Gastrocnemius medialis (tissue), 4 donors: ENCODE measurements at regions of chr9 and their contacts with region 1.

Region 1: DNA sequence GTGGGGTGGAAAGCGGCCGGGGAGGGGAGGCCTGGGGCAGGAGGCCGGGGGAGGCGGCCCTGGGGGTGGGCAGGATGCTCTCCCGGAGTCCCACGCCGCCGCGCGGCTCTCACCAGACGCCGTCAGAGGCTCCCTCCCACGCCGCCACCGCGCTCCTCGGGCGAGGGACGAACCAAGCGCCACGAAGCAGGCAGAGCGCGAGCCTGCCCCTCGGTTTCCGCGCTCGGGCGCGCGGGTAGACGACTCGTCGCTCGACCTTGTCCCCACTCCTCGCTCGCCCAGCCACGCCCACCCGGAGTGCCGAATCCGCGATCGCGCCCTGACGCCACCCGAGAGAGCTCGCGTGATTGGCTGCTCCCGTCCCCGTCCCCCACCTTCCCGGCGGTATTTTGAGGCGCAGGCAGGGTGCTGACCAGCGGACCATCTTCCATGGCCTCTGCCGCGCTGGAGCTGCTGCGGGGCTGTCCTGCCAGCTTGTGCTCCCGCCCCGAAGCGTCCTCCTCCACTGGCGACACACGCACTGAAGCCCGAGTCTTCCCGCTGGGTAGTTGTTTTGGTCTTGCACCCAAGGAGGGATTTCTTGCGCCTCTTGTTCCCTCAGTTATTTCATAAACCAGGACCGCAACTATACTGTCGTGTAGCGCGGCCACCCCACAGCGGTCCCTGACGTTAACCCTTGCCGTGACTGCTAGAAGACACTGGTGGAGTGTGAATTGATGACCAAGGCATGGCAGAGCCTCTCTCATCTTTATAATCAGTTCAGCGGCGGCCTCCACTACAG is at the start of gene GNE:
- DNase-seq: peak; percentile 97
- ATAC-seq: peak; percentile 95 to 96
- H3K4me3 ChIP-seq: peak within 1 kb of the TSS; percentile 80 to 97 (median 96)
- H3K27ac ChIP-seq: peak within 1 kb of the TSS; percentile 98 to 99 (median 98)
- H3K4me1 ChIP-seq: peaks cover 4 to 5% of the 10 kb centered on the region in 2 donors
- H3K27me3 ChIP-seq: no peaks in the 10 kb centered on the region
- CTCF ChIP-seq: no peak
- POLR2A ChIP-seq: peak; percentile 91 to 92
- total RNA-seq, gene GNE: 11.0 to 18.5 (median 13.9) TPM

Region 2: DNA sequence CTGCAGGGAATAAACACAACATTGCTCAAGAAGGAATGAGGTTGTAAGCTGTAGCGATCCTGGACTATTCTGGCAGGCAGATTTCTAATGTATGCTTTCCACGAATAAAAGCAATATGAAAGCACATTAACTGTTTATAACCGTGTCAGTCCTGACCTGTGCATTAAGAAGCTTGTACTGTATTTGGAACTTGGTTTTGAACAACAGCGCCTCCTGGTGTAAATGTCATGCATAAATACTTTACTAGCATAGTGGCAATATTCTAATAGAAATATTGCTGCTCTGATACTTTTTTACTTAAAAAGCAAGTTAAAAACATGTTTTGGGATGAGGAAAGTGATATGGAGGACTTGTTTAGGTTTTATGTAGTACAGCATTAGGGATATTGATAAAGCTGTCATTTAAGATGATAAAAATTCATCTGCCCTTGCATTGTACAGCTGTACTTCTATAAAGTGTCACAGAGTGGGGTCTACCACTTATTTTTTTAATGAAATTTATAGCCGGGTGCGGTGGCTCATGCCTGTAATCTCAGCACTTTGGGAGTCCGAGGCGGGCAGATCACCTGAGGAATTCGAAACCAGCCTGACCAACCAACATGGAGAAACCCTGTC is 70.5 kb after region 1 on chr9:
- in situ Hi-C with region 1: no loop called
- intact Hi-C with region 1: loop called (anchors 5 kb)
- DNase-seq: no peak
- ATAC-seq: peak; percentile 57 to 82
- H3K4me3 ChIP-seq: no peak overlapping the region
- H3K27ac ChIP-seq: no peak overlapping the region
- H3K4me1 ChIP-seq: peaks cover 4% of the 10 kb centered on the region in 2 donors
- H3K27me3 ChIP-seq: no peaks in the 10 kb centered on the region
- CTCF ChIP-seq: peak; percentile 64 to 81 (median 71)
- POLR2A ChIP-seq: no peak

Region 3: GRCh38 chr9:36487482-36488388 is 229.3 kb after region 1 on chr9:
- in situ Hi-C with region 1: no loop called
- intact Hi-C with region 1: loop called (anchors 10 kb)
- DNase-seq: peak; percentile 76 to 86
- ATAC-seq: peak; percentile 80 to 90
- H3K4me3 ChIP-seq: peak overlapping the region; percentile 59 to 92 (median 74)
- H3K27ac ChIP-seq: peak overlapping the region; percentile 83 to 96 (median 90)
- H3K4me1 ChIP-seq: peaks cover 17 to 24% of the 10 kb centered on the region in 2 donors
- H3K27me3 ChIP-seq: no peaks in the 10 kb centered on the region
- CTCF ChIP-seq: peak in 3 of 5 experiments; percentile 12 to 25 (median 24)
- POLR2A ChIP-seq: peak; percentile 78 to 89

Region 4: GRCh38 chr9:36818965-36819870 is 560.8 kb after region 1 on chr9:
- in situ Hi-C with region 1: no loop called
- intact Hi-C with region 1: no loop called
- DNase-seq: no peak
- ATAC-seq: no peak
- H3K4me3 ChIP-seq: peak overlapping the region in 3 of 4 donors; percentile 9 to 34 (median 29)
- H3K27ac ChIP-seq: no peak overlapping the region
- H3K4me1 ChIP-seq: no peaks in the 10 kb centered on the region
- H3K27me3 ChIP-seq: peaks cover 18 to 35% (median 22%) of the 10 kb centered on the region in 3 donors
- CTCF ChIP-seq: no peak
- POLR2A ChIP-seq: no peak